Activated CD8-positive, alpha-beta T cell treated with anti-CD3 and anti-CD28 coated beads for 36 hours (primary cell): ENCODE measurements at regions of chr3 and their contacts with region 1.

Region 1: GRCh38 chr3:49929331-49930240 is at the start of gene MON1A:
- DNase-seq: peak; percentile 92
- ATAC-seq: peak; percentile 95
- H3K4me3 Mint-ChIP-seq: peak within 1 kb of the TSS; percentile 86
- H3K27ac Mint-ChIP-seq: peak within 1 kb of the TSS; percentile 90
- H3K4me1 Mint-ChIP-seq: peaks cover 25% of the 10 kb centered on the region
- H3K27me3 Mint-ChIP-seq: no peaks in the 10 kb centered on the region
- CTCF ChIP-seq: peak; percentile 33
- total RNA-seq, gene MON1A: 6.9 to 8.5 TPM

Region 2: GRCh38 chr3:49906004-49906743 is 23.4 kb before region 1 on chr3:
- CTCF ChIA-PET with region 1: interaction called, 10 read pairs
- POLR2A ChIA-PET with region 1: interaction called, 3 read pairs
- intact Hi-C with region 1: no loop called
- DNase-seq: peak; percentile 79
- ATAC-seq: peak; percentile 38
- H3K4me3 Mint-ChIP-seq: no peak overlapping the region
- H3K27ac Mint-ChIP-seq: peak overlapping the region; percentile 52
- H3K4me1 Mint-ChIP-seq: peaks cover 20% of the 10 kb centered on the region
- H3K27me3 Mint-ChIP-seq: no peaks in the 10 kb centered on the region
- CTCF ChIP-seq: peak; percentile 71

Region 3: GRCh38 chr3:49939858-49940666 is 10.5 kb after region 1 on chr3 and contains the start of gene RBM6:
- CTCF ChIA-PET with region 1: interaction called, 4 read pairs
- POLR2A ChIA-PET with region 1: interaction called, 28 read pairs
- intact Hi-C with region 1: no loop called
- DNase-seq: peak; percentile 98
- ATAC-seq: peak; percentile 99
- H3K4me3 Mint-ChIP-seq: peak within 1 kb of the TSS; percentile 89
- H3K27ac Mint-ChIP-seq: peak within 1 kb of the TSS; percentile 91
- H3K4me1 Mint-ChIP-seq: peaks cover 22% of the 10 kb centered on the region
- H3K27me3 Mint-ChIP-seq: no peaks in the 10 kb centered on the region
- CTCF ChIP-seq: no peak
- total RNA-seq, gene RBM6: 90.8 to 95.2 TPM

Region 4: DNA sequence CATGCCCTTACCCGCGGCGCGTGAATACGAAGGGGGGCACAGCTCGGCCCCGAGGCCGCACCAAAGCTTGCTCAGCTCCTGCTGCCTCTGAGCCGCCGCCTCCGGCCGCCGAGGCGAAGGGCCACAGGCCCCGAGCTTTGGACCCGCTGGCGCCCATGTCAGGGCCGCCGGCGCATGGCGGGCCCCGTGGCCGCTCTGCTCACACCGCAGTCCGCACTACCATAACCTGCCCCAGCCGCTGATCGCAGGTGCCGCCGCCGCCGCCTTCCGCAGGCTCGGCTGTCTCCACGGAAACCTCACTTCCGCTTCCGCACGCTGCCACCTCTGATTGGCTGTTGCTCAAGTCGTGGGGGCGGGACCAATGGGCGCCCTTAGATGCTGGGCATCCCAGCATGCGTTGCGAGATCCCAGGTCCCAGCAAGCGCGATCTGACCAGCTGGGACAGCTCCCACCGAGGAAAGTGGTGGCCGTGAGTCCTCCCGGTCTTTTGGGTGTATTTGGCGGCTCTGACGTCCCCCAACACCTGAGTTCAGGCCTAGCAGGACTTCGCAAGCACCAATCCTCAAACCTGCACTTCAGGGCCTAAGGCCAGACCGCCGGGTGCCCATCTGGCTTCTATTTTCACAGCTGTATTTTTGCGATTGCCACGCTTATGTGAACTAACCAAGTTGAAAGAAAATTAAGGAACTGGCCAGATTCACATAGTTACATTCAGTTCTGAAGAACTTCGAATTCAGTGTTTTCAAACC is 398.5 kb after region 1 on chr3 and contains the start of gene TUSC2:
- CTCF ChIA-PET with region 1: no interaction called
- POLR2A ChIA-PET with region 1: no interaction called
- intact Hi-C with region 1: no loop called
- DNase-seq: peak; percentile 99
- ATAC-seq: peak; percentile 94
- H3K4me3 Mint-ChIP-seq: peak within 1 kb of the TSS; percentile 81
- H3K27ac Mint-ChIP-seq: peak within 1 kb of the TSS; percentile 72
- H3K4me1 Mint-ChIP-seq: peaks cover 19% of the 10 kb centered on the region
- H3K27me3 Mint-ChIP-seq: no peaks in the 10 kb centered on the region
- CTCF ChIP-seq: no peak
- total RNA-seq, gene TUSC2: 16.7 to 19.5 TPM